CD4-positive, alpha-beta memory T cell (primary cell): ENCODE measurements at regions of chr11 and their contacts with region 1.

Region 1: GRCh38 chr11:75388386-75389275 is 10.7 kb upstream of the RPS3 start:
- DNase-seq: peak; percentile 69 to 76 (median 74)
- H3K4me3 ChIP-seq: no peak overlapping the region
- H3K4me3 Mint-ChIP-seq: no peak overlapping the region
- H3K27ac ChIP-seq: no peak overlapping the region
- H3K27ac Mint-ChIP-seq: no peak overlapping the region
- H3K4me1 ChIP-seq: peaks cover 17% of the 10 kb centered on the region
- H3K4me1 Mint-ChIP-seq: peaks cover 4 to 13% (median 7%) of the 10 kb centered on the region in 4 donors
- H3K27me3 ChIP-seq: no peaks in the 10 kb centered on the region
- H3K27me3 Mint-ChIP-seq: peaks cover 4% of the 10 kb centered on the region in 2 donors

Region 2: DNA sequence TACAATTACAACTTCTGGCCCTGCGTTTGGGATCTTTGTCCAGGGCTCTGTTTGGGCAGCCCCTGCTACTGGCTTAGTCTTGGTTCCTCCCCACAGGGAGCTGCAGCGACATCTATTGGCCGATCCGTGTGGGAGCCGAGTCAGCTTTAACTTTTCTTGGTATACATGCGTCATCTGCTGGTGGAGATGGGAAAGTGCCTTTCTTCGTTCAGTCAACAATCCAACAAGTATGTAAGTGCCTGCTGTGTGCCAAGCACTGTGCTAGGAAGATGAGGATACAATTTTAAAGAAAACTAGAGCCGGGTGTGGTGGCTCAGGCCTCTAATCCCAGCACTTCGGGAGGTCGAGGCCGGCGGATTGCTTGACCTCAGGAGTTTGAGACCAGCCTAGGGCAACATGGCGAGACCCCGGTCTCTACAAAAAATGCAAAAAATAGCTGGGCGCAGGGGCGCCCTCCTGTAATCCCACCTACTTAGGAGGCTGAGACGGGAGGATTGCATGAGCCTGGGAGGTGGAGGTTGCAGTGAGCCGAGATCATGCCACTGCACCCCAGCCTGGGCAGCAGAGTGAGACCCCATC is 139.9 kb before region 1 on chr11:
- CTCF ChIA-PET with region 1: interaction called, 10 read pairs
- POLR2A ChIA-PET with region 1: no interaction called
- intact Hi-C with region 1: no loop called
- DNase-seq: peak; percentile 81 to 87 (median 84)
- H3K4me3 ChIP-seq: no peak overlapping the region
- H3K4me3 Mint-ChIP-seq: no peak overlapping the region
- H3K27ac ChIP-seq: no peak overlapping the region
- H3K27ac Mint-ChIP-seq: peak overlapping the region in 1 of 7 donors; percentile 47
- H3K4me1 ChIP-seq: no peaks in the 10 kb centered on the region
- H3K4me1 Mint-ChIP-seq: peaks cover 0 to 3% (median 1%) of the 10 kb centered on the region in 4 donors
- H3K27me3 ChIP-seq: no peaks in the 10 kb centered on the region
- H3K27me3 Mint-ChIP-seq: peaks cover 10 to 14% of the 10 kb centered on the region in 2 donors

Region 3: DNA sequence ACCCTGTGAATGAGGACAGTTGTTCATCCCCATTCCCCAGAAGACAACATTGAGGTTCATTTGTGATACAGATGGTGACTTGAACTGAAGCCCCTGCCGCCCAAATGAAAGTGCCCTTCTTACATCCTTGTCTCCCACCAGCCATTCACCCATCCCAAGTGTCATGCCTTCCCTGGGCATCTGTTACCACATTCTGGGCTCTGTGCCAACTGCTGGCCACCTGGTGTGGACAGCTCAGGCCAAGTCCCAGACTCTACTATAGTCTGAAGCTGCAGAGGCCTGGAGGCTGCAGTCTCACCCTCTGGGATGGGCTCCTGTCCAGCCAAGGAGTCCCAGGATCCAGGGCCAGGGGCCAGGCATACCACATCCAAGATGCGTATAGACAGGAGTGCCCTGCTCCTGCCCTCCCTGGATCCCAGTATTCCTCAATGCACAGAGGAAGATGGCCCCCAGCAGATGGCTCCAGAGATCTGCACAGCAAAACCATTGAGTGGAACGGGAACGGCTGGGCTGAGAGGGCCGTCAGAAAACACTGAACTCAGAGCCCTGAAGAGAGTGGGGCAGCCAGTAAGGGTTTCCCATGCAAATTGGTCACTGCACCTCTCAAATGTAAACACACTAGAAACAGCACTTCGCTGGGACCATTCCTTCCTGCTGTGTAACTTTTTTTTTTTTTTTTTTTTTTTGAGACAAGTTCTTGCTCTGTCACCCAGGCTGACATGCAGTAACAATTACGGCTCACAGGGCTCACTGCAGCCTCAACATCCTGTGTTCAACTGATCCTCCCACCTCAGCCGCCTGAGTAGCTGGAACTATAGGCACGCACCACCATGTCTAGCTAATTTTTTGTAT is 60.0 kb before region 1 on chr11:
- CTCF ChIA-PET with region 1: interaction called, 128 read pairs
- POLR2A ChIA-PET with region 1: interaction called, 7 read pairs
- intact Hi-C with region 1: loop called (anchors 1 kb)
- DNase-seq: peak; percentile 57 to 68 (median 66)
- H3K4me3 ChIP-seq: peak overlapping the region; percentile 10 to 11
- H3K4me3 Mint-ChIP-seq: peak overlapping the region; percentile 25 to 69 (median 56)
- H3K27ac ChIP-seq: peak overlapping the region; percentile 25
- H3K27ac Mint-ChIP-seq: peak overlapping the region; percentile 65 to 91 (median 86)
- H3K4me1 ChIP-seq: peaks cover 54% of the 10 kb centered on the region
- H3K4me1 Mint-ChIP-seq: peaks cover 44 to 78% (median 59%) of the 10 kb centered on the region in 4 donors
- H3K27me3 ChIP-seq: no peaks in the 10 kb centered on the region
- H3K27me3 Mint-ChIP-seq: no peaks in the 10 kb centered on the region

Region 4: DNA sequence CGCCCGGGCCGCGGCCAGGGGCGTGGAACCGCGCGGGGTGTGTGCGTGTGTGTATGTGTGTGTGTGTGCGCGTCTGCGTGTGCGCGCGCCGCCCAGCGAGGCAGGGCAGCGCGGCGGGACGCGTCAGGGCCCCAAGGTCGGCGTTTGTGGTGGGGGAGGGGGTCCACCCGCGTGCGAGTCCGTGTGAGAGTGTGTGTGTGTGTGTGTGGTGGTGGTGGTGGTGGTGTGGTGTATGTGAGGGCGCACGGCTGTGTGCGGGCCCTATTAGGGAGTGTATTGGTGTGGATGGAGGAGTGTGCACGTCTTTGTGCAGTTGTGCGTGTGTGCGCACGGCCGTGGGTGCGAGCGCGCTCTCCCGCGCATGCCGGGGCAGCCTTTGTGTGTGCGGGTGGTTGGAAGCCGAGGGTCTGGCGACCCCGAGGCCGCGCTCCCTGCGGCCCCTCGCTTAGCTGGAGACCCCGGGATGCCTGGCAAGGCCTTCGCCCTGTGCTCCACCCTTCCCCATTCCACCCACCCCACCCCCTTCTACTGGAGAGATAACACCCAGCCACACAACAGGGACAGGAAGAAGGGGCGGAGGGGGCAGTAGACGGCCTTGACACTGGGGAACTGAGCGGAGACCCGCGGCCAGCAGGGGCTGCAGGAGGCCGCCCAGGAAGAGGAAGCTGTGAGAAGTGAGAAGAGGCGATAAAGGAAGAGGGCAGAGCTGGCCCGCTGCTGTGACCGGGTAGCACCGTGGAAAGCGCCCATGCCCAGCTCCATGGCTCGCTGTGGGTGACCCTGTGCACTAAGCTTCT is 36.6 kb before region 1 on chr11:
- CTCF ChIA-PET with region 1: interaction called, 43 read pairs
- POLR2A ChIA-PET with region 1: interaction called, 19 read pairs
- intact Hi-C with region 1: no loop called
- DNase-seq: peak; percentile 70 to 80 (median 74)
- H3K4me3 ChIP-seq: peak overlapping the region; percentile 77 to 83
- H3K4me3 Mint-ChIP-seq: peak overlapping the region; percentile 90 to 96 (median 94)
- H3K27ac ChIP-seq: peak overlapping the region; percentile 75
- H3K27ac Mint-ChIP-seq: peak overlapping the region; percentile 87 to 96 (median 93)
- H3K4me1 ChIP-seq: peaks cover 49% of the 10 kb centered on the region
- H3K4me1 Mint-ChIP-seq: peaks cover 40 to 73% (median 55%) of the 10 kb centered on the region in 4 donors
- H3K27me3 ChIP-seq: no peaks in the 10 kb centered on the region
- H3K27me3 Mint-ChIP-seq: no peaks in the 10 kb centered on the region

Region 5: GRCh38 chr11:75406338-75406777 is 17.7 kb after region 1 on chr11:
- CTCF ChIA-PET with region 1: interaction called, 45 read pairs
- POLR2A ChIA-PET with region 1: interaction called, 3 read pairs
- intact Hi-C with region 1: no loop called
- DNase-seq: no peak
- H3K4me3 ChIP-seq: no peak overlapping the region
- H3K4me3 Mint-ChIP-seq: no peak overlapping the region
- H3K27ac ChIP-seq: no peak overlapping the region
- H3K27ac Mint-ChIP-seq: peak overlapping the region in 2 of 7 donors; percentile 42 to 68
- H3K4me1 ChIP-seq: peaks cover 36% of the 10 kb centered on the region
- H3K4me1 Mint-ChIP-seq: peaks cover 30 to 53% (median 36%) of the 10 kb centered on the region in 4 donors
- H3K27me3 ChIP-seq: no peaks in the 10 kb centered on the region
- H3K27me3 Mint-ChIP-seq: no peaks in the 10 kb centered on the region

Region 6: DNA sequence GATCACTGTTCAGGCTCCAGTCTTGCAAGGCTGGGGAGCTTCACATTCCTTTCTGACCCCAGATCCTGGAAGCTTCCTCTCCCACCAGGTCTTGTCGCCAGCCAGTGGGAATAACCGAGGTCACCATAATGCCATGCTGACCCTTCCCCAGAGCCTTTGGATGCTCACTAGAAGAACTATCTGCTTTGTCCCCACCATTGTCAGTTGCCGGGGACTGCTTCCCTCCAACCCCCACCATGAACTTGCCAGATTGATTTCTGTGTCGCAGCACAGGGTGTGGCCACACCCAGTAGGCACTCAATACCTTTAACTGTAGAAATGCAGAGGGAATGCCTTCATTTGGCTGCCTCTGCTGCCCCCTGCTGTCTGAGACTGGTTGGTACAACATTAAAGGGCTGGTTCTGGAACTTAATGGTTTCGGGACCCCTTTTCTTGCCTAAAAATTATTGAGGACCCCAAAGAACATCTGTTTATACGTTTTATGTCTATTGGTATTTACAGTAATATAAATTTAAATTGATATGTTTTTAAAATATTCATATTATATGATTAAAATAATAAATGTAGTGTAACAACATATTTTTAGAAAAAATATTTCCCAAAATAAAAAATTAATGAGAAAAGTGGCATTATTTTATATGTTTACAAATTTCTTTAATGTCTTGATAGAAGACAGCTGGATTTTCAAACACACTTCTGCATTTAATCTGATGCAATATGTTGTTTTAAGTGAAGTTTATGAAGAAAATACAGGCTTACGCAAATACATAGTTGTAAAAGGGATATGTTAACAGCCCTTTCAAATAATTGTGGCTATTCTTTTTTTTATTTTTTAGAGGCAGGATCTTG is 143.8 kb after region 1 on chr11:
- CTCF ChIA-PET with region 1: interaction called, 183 read pairs
- POLR2A ChIA-PET with region 1: interaction called, 8 read pairs
- intact Hi-C with region 1: loop called (anchors 1 kb)
- DNase-seq: peak; percentile 77 to 83 (median 80)
- H3K4me3 ChIP-seq: no peak overlapping the region
- H3K4me3 Mint-ChIP-seq: peak overlapping the region in 7 of 8 donors; percentile 20 to 61 (median 35)
- H3K27ac ChIP-seq: no peak overlapping the region
- H3K27ac Mint-ChIP-seq: peak overlapping the region in 6 of 7 donors; percentile 8 to 86 (median 75)
- H3K4me1 ChIP-seq: peaks cover 30% of the 10 kb centered on the region
- H3K4me1 Mint-ChIP-seq: peaks cover 28 to 53% (median 33%) of the 10 kb centered on the region in 4 donors
- H3K27me3 ChIP-seq: no peaks in the 10 kb centered on the region
- H3K27me3 Mint-ChIP-seq: no peaks in the 10 kb centered on the region

Region 7: GRCh38 chr11:75867775-75868374 is 479.2 kb after region 1 on chr11:
- CTCF ChIA-PET with region 1: interaction called, 4 read pairs
- POLR2A ChIA-PET with region 1: no interaction called
- intact Hi-C with region 1: loop called (anchors 2 kb)
- DNase-seq: peak in 4 of 5 donors; percentile 47 to 53 (median 48)
- H3K4me3 ChIP-seq: no peak overlapping the region
- H3K4me3 Mint-ChIP-seq: no peak overlapping the region
- H3K27ac ChIP-seq: no peak overlapping the region
- H3K27ac Mint-ChIP-seq: peak overlapping the region in 2 of 7 donors; percentile 12 to 44
- H3K4me1 ChIP-seq: no peaks in the 10 kb centered on the region
- H3K4me1 Mint-ChIP-seq: peaks cover 0 to 7% (median 5%) of the 10 kb centered on the region in 4 donors
- H3K27me3 ChIP-seq: no peaks in the 10 kb centered on the region
- H3K27me3 Mint-ChIP-seq: no peaks in the 10 kb centered on the region